ENCODE measurements at regions of chr16 and their contacts with region 1.

Region 1: DNA sequence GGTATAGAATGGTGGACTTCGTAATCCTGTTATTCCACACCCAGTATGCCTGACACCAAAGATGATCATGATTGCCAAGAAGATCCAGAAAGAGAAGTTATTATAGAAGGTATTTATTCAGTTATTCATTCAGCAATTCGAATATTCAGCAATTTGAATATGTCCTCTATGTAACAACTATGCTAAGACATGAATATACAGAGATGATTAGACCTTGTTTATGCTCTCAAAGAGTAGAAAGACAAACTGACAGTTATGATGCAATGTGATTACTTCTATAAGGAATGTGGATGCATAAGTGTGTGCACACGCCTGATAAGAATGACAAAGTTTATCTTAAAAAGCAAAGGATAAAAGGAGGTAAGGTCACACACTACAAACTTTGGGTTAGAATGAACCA is 218.1 kb downstream of the CDH11 start:
- DNase-seq: no peak
- ATAC-seq: no peak
- H3K4me3 ChIP-seq: no peak overlapping the region
- H3K27ac ChIP-seq: no peak overlapping the region
- H3K4me1 ChIP-seq: no peaks in the 10 kb centered on the region
- H3K27me3 ChIP-seq: peaks cover 24% of the 10 kb centered on the region; the same call in 1 of the 2 replicates
- CTCF ChIP-seq: no peak

Region 2: GRCh38 chr16:64638766-64639165 is 265.0 kb before region 1 on chr16:
- CTCF ChIA-PET with region 1: no interaction called
- POLR2A ChIA-PET with region 1: no interaction called
- intact Hi-C with region 1: no loop called
- DNase-seq: no peak
- ATAC-seq: no peak
- H3K4me3 ChIP-seq: no peak overlapping the region
- H3K27ac ChIP-seq: no peak overlapping the region
- H3K4me1 ChIP-seq: no peaks in the 10 kb centered on the region
- H3K27me3 ChIP-seq: peaks cover 14% of the 10 kb centered on the region
- CTCF ChIP-seq: no peak

Region 3: DNA sequence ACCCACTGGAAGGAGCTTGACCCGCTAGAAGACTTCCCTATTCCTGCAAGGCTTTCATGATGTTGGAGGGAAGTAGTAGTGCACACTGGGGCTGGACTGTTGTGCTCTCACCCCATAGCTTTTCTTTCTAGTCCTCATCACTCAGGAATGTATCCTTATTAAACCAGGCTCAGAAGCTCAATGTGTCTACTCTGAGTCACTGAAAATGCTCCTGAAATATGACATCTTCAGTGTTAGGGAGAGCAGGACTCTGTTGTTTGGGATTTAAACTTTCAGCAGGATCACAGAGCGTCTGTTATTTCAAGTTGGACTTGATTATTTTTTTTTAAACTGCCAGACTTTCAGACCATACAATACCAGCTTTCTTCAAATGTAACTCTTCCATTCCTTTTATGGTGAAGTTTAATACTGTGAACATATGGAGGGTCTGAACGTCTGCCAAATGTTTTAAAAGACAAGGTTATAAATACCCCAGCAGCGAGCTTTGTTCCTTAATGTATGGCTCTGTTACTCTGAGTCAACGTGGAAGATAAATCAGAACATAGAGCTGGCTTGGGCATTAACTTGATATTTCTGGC is 39.4 kb before region 1 on chr16:
- CTCF ChIA-PET with region 1: no interaction called
- POLR2A ChIA-PET with region 1: no interaction called
- intact Hi-C with region 1: no loop called
- DNase-seq: peak; percentile 76
- ATAC-seq: peak; percentile 98
- H3K4me3 ChIP-seq: no peak overlapping the region
- H3K27ac ChIP-seq: peak overlapping the region; percentile 26; the same call in 1 of the 2 replicates
- H3K4me1 ChIP-seq: peaks cover 16% of the 10 kb centered on the region; the same call in 1 of the 2 replicates
- H3K27me3 ChIP-seq: 0 out of 2 replicates have a peak, but pooled peaks cover 6% of the 10 kb centered on the region
- CTCF ChIP-seq: no peak

Region 4: GRCh38 chr16:65449526-65449925 is 545.8 kb after region 1 on chr16:
- CTCF ChIA-PET with region 1: no interaction called
- POLR2A ChIA-PET with region 1: interaction called, 10 read pairs
- intact Hi-C with region 1: no loop called
- DNase-seq: no peak
- ATAC-seq: no peak
- H3K4me3 ChIP-seq: no peak overlapping the region
- H3K27ac ChIP-seq: no peak overlapping the region
- H3K4me1 ChIP-seq: no peaks in the 10 kb centered on the region
- H3K27me3 ChIP-seq: no peaks in the 10 kb centered on the region
- CTCF ChIP-seq: no peak

Measured in PC-3 (cell line).